ENCODE measurements at regions of chr19 and their contacts with region 1.

Region 1: GRCh38 chr19:17605761-17606745 is 50.6 kb downstream of the COLGALT1 start:
- DNase-seq: peak; percentile 95
- H3K4me3 ChIP-seq: peak overlapping the region; percentile 65
- H3K4me3 Mint-ChIP-seq: peak overlapping the region; percentile 73
- H3K27ac Mint-ChIP-seq: peak overlapping the region; percentile 81
- H3K4me1 ChIP-seq: no peaks in the 10 kb centered on the region
- H3K4me1 Mint-ChIP-seq: peaks cover 6% of the 10 kb centered on the region
- H3K27me3 ChIP-seq: no peaks in the 10 kb centered on the region
- H3K27me3 Mint-ChIP-seq: no peaks in the 10 kb centered on the region
- CTCF ChIP-seq: peak; percentile 52 to 66

Region 2: GRCh38 chr19:17539238-17540117 is 66.6 kb before region 1 on chr19:
- CTCF ChIA-PET with region 1: interaction called, 10 read pairs
- POLR2A ChIA-PET with region 1: interaction called, 3 read pairs
- intact Hi-C with region 1: no loop called
- DNase-seq: peak; percentile 94 to 97
- H3K4me3 ChIP-seq: peak overlapping the region; percentile 53
- H3K4me3 Mint-ChIP-seq: peak overlapping the region; percentile 80
- H3K27ac Mint-ChIP-seq: no peak overlapping the region
- H3K4me1 ChIP-seq: no peaks in the 10 kb centered on the region
- H3K4me1 Mint-ChIP-seq: peaks cover 7% of the 10 kb centered on the region
- H3K27me3 ChIP-seq: no peaks in the 10 kb centered on the region; the same call in none of the 2 replicates
- H3K27me3 Mint-ChIP-seq: no peaks in the 10 kb centered on the region
- CTCF ChIP-seq: peak; percentile 26 to 71

Region 3: DNA sequence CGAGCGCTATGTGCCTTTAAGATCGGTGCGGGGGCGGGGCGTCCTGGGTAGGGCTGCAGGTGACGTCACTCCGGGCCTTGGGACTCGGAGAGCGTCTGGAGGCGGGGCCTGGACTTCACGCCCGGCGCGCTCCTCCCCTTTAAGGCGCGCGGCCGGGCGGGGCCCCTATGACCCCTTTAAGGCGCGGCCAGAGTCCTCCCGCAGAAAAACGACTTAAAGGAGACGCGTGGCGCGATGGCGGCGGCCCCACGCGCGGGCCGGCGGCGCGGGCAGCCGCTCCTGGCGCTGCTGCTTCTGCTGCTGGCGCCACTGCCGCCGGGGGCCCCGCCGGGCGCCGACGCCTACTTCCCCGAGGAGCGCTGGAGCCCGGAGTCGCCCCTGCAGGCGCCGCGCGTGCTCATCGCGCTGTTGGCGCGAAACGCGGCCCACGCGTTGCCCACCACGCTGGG is 50.5 kb before region 1 on chr19 and contains the start of gene COLGALT1:
- CTCF ChIA-PET with region 1: interaction called, 8 read pairs
- POLR2A ChIA-PET with region 1: interaction called, 4 read pairs
- intact Hi-C with region 1: loop called (anchors 5 kb)
- DNase-seq: peak; percentile 96 to 97
- H3K4me3 ChIP-seq: peak within 1 kb of the TSS; percentile 95
- H3K4me3 Mint-ChIP-seq: peak within 1 kb of the TSS; percentile 77
- H3K27ac Mint-ChIP-seq: peak within 1 kb of the TSS; percentile 53
- H3K4me1 ChIP-seq: 0 out of 2 replicates have a peak, but pooled peaks cover 9% of the 10 kb centered on the region
- H3K4me1 Mint-ChIP-seq: peaks cover 13% of the 10 kb centered on the region
- H3K27me3 ChIP-seq: no peaks in the 10 kb centered on the region
- H3K27me3 Mint-ChIP-seq: no peaks in the 10 kb centered on the region
- CTCF ChIP-seq: no peak
- total RNA-seq, gene COLGALT1: 80.1 and 81.9 TPM in 2 replicates

Region 4: DNA sequence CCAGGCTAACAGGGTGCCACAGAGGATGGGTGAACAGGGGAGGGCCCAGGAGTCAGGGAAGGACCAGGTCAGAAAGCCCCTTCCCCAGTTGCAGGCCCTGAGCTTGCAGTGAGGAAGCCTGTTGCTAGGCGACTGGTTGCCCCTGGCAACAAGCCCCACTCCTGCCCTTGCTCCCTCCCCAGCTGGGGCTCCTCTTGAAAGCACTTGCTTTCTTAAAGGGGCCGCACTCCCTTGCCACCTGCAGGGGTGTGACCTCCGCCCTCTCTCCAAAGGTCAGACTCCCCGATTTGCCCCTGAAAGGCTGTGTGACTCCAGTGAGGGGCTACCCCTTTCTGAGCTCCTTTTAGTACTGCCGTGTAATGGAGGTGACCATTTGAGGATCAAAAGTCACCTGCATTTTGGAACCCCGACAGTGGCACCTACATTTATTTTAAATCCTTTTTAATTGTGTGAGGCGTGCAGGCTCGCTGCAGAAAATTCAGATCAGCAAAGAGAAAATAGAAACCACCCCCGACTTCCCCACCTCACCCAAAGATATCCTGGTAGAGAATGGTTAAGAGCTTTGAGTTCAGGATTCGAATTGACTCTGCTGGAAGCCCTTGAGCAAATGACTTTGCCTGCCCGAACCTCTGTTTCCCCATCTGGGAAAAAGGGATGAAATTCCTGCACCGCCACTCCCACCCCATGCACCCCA is 150.1 kb after region 1 on chr19:
- CTCF ChIA-PET with region 1: no interaction called
- POLR2A ChIA-PET with region 1: no interaction called
- intact Hi-C with region 1: loop called (anchors 10 kb)
- DNase-seq: peak; percentile 48 to 57
- H3K4me3 ChIP-seq: no peak overlapping the region
- H3K4me3 Mint-ChIP-seq: no peak overlapping the region
- H3K27ac Mint-ChIP-seq: no peak overlapping the region
- H3K4me1 ChIP-seq: no peaks in the 10 kb centered on the region
- H3K4me1 Mint-ChIP-seq: no peaks in the 10 kb centered on the region
- H3K27me3 ChIP-seq: no peaks in the 10 kb centered on the region
- H3K27me3 Mint-ChIP-seq: peaks cover 3% of the 10 kb centered on the region
- CTCF ChIP-seq: no peak

Region 5: GRCh38 chr19:17766543-17767131 is 160.6 kb after region 1 on chr19:
- CTCF ChIA-PET with region 1: interaction called, 20 read pairs
- POLR2A ChIA-PET with region 1: no interaction called
- intact Hi-C with region 1: no loop called
- DNase-seq: peak; percentile 86 to 88
- H3K4me3 ChIP-seq: peak overlapping the region; percentile 28
- H3K4me3 Mint-ChIP-seq: peak overlapping the region; percentile 73
- H3K27ac Mint-ChIP-seq: no peak overlapping the region
- H3K4me1 ChIP-seq: no peaks in the 10 kb centered on the region
- H3K4me1 Mint-ChIP-seq: no peaks in the 10 kb centered on the region
- H3K27me3 ChIP-seq: no peaks in the 10 kb centered on the region
- H3K27me3 Mint-ChIP-seq: no peaks in the 10 kb centered on the region
- CTCF ChIP-seq: peak; percentile 69 to 90

Measured in Caco-2 (cell line).